Adrenal gland (tissue), 19 donors: ENCODE measurements at regions of chr4 and their contacts with region 1.

Region 1: GRCh38 chr4:166165829-166166420 is 292.9 kb downstream of the TLL1 start:
- DNase-seq: peak in 4 of 7 donors; percentile 19 to 24 (median 19)
- H3K4me3 ChIP-seq: no peak overlapping the region
- H3K27ac ChIP-seq: no peak overlapping the region
- H3K4me1 ChIP-seq: no peaks in the 10 kb centered on the region
- H3K27me3 ChIP-seq: no peaks in the 10 kb centered on the region
- CTCF ChIP-seq: peak; percentile 64 to 82 (median 72)
- POLR2A ChIP-seq: no peak

Region 2: DNA sequence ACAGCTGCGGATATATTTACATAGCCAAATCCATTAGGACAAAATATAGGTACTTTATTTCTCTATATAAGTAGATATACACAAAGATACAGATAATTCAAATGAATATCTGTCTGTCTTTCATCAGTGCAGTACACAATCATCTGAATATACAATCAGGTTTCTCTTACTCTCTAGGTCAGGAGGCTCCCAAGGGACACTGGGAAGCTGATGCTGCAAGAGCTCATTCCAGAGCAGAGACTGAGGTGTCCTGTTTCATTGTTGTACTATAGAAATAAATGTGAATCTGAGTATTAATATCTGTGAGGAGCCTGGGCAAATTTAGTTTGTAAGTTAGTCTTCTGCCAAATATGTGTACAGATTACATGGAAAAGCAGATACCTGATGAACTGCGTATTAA is 288.6 kb before region 1 on chr4:
- intact Hi-C with region 1: no loop called
- DNase-seq: no peak
- H3K4me3 ChIP-seq: no peak overlapping the region
- H3K27ac ChIP-seq: no peak overlapping the region
- H3K4me1 ChIP-seq: no peaks in the 10 kb centered on the region
- H3K27me3 ChIP-seq: peaks cover 23% of the 10 kb centered on the region
- CTCF ChIP-seq: no peak
- POLR2A ChIP-seq: no peak

Region 3: DNA sequence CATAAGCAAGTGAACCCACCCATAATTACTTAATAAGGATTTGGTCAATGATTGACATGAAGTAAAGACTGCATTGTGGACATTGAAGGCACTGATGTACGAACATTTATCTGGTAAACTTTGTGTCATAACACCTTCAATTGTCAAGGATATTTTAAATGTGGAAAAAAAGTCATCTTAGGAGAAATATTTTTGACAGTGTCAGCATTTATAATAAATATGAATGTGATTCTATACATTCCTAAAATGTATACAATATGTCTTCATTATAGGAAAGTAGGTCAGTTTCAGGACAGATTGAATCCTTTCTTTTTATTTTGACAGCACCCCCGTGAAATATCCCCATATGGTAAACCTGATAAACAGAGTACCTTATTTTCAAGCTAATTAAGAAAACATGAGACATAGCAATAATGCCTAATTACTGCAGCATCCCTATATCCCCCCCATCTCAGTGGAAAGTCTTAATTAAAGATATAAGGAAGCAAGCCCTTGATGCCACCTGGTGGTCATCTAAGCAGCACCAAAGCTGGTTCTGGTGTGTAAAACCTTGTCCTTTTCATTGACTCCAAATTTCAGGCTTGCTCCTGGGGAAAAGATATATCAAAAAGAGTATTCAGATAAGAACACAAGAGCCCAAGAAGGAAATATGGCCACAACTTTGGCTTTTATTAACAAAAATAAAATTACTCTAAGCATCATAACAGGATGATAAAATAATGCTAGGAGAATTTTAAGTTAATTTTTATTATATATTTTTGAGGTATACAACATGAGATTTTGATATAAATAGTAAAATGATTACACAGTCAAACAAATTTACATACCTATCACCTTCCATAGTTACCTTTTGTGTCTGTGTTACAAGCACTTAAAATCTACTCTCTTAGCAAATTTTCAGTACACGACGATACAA is 86.8 kb after region 1 on chr4:
- intact Hi-C with region 1: loop called in 1 of 2 experiments (anchors 5 kb)
- DNase-seq: peak in 4 of 7 donors; percentile 10 to 37 (median 22)
- H3K4me3 ChIP-seq: no peak overlapping the region
- H3K27ac ChIP-seq: no peak overlapping the region
- H3K4me1 ChIP-seq: no peaks in the 10 kb centered on the region
- H3K27me3 ChIP-seq: no peaks in the 10 kb centered on the region
- CTCF ChIP-seq: peak; percentile 14 to 45 (median 26)
- POLR2A ChIP-seq: no peak

Region 4: GRCh38 chr4:167622481-167623246 is 1456.7 kb after region 1 on chr4:
- intact Hi-C with region 1: loop called in 1 of 2 experiments (anchors 10 kb)
- DNase-seq: peak; percentile 30 to 73 (median 53)
- H3K4me3 ChIP-seq: no peak overlapping the region
- H3K27ac ChIP-seq: no peak overlapping the region
- H3K4me1 ChIP-seq: no peaks in the 10 kb centered on the region
- H3K27me3 ChIP-seq: no peaks in the 10 kb centered on the region
- CTCF ChIP-seq: peak; percentile 32 to 71 (median 53)
- POLR2A ChIP-seq: no peak

Region 5: DNA sequence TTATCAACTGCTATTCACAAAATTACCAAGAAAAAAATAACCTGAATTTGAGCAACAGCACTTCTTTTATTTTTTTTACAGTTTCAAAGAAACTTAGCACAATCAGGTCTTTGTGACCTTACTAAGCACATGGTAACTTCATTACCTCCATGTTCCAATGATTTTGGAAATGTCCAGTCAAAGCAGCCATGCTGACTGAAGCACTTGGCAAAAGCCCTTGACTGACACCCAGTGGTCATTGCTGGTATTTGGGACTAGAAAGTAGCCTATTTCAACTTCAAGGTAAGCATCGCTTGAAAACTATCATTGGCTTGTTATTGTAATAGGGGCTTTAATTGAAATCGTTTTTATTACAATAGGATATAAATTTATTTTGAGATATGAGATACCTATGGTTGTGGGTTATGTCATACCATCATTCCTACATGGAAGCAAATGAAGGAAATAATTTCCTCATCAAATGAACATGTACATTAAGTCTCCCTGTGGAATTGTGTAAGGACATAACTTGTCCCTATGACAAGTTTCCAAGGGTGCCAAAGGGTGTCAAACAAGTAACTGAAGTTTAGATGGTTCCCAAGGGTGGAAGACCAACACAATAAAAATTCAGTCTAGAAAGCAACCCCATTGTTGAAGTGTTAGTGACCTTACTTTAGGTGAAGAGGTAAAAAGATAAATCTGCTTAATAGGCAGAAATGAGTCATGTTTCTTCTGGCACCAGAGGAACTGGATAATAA is 1911.2 kb after region 1 on chr4:
- intact Hi-C with region 1: loop called in 1 of 2 experiments (anchors 5 kb)
- DNase-seq: peak; percentile 47 to 84 (median 68)
- H3K4me3 ChIP-seq: no peak overlapping the region
- H3K27ac ChIP-seq: no peak overlapping the region
- H3K4me1 ChIP-seq: no peaks in the 10 kb centered on the region
- H3K27me3 ChIP-seq: no peaks in the 10 kb centered on the region
- CTCF ChIP-seq: peak; percentile 62 to 85 (median 72)
- POLR2A ChIP-seq: no peak